Caco-2 (cell line): ENCODE measurements at regions of chr2 and their contacts with region 1.

Region 1: DNA sequence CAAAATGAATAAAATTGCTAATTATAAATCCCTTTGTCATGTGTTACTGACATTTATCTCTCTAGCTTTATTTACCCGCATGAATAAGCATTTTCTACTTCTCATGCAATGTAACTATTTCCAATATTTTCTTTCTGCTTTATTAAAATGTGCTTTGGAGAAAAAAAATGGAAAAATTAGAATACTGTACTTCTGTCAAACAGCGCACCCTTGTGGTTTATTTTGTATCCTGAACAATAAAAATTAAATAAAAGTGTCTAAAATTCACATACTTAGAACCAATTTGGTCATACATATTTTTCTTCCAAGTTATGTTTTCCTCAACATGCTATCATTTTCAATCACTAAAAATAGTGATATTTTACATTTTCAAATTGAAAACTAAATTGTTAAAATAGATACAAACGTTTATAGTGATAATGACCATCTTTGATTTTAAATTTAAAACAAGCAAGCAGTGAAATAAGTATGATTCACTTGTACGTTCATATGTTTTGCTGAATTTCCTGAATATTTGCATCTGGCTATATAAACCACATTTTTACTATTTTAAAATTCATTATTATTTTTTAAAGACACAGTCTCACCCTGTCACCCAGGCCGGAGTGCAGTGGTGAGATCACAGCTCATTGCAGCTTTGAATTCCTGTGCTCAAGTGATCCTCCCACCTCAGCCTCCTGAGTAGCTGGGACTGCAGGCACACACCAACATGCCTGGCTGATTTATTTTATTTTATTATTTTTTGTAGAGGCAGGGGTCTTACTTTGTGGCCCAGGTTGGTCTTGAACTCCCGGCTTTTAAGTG is 95.9 kb upstream of the GRB14 start:
- DNase-seq: peak in 1 of 2 experiments; percentile 39
- H3K4me3 ChIP-seq: no peak overlapping the region
- H3K4me3 Mint-ChIP-seq: no peak overlapping the region
- H3K27ac Mint-ChIP-seq: no peak overlapping the region
- H3K4me1 ChIP-seq: peaks cover 53% of the 10 kb centered on the region
- H3K4me1 Mint-ChIP-seq: peaks cover 34% of the 10 kb centered on the region
- H3K27me3 ChIP-seq: no peaks in the 10 kb centered on the region
- H3K27me3 Mint-ChIP-seq: no peaks in the 10 kb centered on the region
- CTCF ChIP-seq: peak; percentile 45 to 77

Region 2: DNA sequence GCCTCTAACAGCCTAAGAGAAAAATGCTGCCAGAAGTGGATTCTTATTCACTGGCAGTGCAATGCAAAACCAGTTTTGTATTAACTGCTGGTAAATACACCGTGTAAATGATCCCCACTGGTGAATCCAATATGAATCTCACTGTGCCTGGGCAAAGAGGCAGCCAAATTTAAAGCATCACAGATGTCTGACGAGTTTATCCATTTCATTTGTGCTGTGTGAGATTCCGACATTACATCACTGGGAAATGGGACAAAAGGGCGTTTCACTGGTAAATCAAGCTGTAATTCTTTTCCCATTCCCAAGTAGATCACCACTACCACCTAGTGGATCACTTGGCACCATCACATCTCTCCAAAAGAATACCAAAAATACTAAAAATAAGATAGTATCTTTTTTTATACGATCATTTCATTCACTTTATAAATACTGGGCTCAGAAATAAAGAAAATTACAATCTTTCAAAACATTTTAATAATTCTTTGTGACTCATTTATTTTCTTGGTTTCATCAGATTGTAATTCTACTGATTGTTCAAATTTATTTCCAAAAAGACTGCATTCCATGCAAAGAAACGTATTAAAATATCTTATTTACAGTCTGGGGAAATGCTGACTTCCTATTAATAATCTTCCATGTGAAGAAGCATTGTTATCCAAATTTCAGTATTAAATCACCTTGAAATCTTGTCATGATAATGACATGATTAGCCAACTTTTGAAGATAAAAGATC is 221.5 kb before region 1 on chr2:
- CTCF ChIA-PET with region 1: no interaction called
- POLR2A ChIA-PET with region 1: no interaction called
- intact Hi-C with region 1: loop called (anchors 5 kb)
- DNase-seq: peak in 1 of 2 experiments; percentile 40
- H3K4me3 ChIP-seq: no peak overlapping the region
- H3K4me3 Mint-ChIP-seq: no peak overlapping the region
- H3K27ac Mint-ChIP-seq: no peak overlapping the region
- H3K4me1 ChIP-seq: 0 out of 2 replicates have a peak, but pooled peaks cover 10% of the 10 kb centered on the region
- H3K4me1 Mint-ChIP-seq: peaks cover 10% of the 10 kb centered on the region
- H3K27me3 ChIP-seq: no peaks in the 10 kb centered on the region
- H3K27me3 Mint-ChIP-seq: no peaks in the 10 kb centered on the region
- CTCF ChIP-seq: peak; percentile 51 to 60

Region 3: GRCh38 chr2:164560181-164560792 is 156.9 kb before region 1 on chr2:
- CTCF ChIA-PET with region 1: interaction called, 8 read pairs
- POLR2A ChIA-PET with region 1: no interaction called
- intact Hi-C with region 1: loop called (anchors 1 kb)
- DNase-seq: peak in 1 of 2 experiments; percentile 47
- H3K4me3 ChIP-seq: no peak overlapping the region
- H3K4me3 Mint-ChIP-seq: no peak overlapping the region
- H3K27ac Mint-ChIP-seq: no peak overlapping the region
- H3K4me1 ChIP-seq: 0 out of 2 replicates have a peak, but pooled peaks cover 4% of the 10 kb centered on the region
- H3K4me1 Mint-ChIP-seq: peaks cover 2% of the 10 kb centered on the region
- H3K27me3 ChIP-seq: no peaks in the 10 kb centered on the region
- H3K27me3 Mint-ChIP-seq: no peaks in the 10 kb centered on the region
- CTCF ChIP-seq: peak; percentile 74 to 76

Region 4: GRCh38 chr2:164599966-164600589 is 117.1 kb before region 1 on chr2:
- CTCF ChIA-PET with region 1: no interaction called
- POLR2A ChIA-PET with region 1: no interaction called
- intact Hi-C with region 1: loop called (anchors 2 kb)
- DNase-seq: peak; percentile 60 to 80
- H3K4me3 ChIP-seq: no peak overlapping the region
- H3K4me3 Mint-ChIP-seq: no peak overlapping the region
- H3K27ac Mint-ChIP-seq: no peak overlapping the region
- H3K4me1 ChIP-seq: no peaks in the 10 kb centered on the region
- H3K4me1 Mint-ChIP-seq: no peaks in the 10 kb centered on the region
- H3K27me3 ChIP-seq: no peaks in the 10 kb centered on the region
- H3K27me3 Mint-ChIP-seq: no peaks in the 10 kb centered on the region
- CTCF ChIP-seq: peak; percentile 92 to 95

Region 5: GRCh38 chr2:164697674-164698461 is 19.3 kb before region 1 on chr2:
- CTCF ChIA-PET with region 1: no interaction called
- POLR2A ChIA-PET with region 1: no interaction called
- intact Hi-C with region 1: loop called (anchors 1 kb)
- DNase-seq: peak in 1 of 2 experiments; percentile 36
- H3K4me3 ChIP-seq: no peak overlapping the region
- H3K4me3 Mint-ChIP-seq: peak overlapping the region; percentile 45
- H3K27ac Mint-ChIP-seq: no peak overlapping the region
- H3K4me1 ChIP-seq: peaks cover 18% of the 10 kb centered on the region
- H3K4me1 Mint-ChIP-seq: peaks cover 14% of the 10 kb centered on the region
- H3K27me3 ChIP-seq: no peaks in the 10 kb centered on the region
- H3K27me3 Mint-ChIP-seq: no peaks in the 10 kb centered on the region
- CTCF ChIP-seq: peak; percentile 65 to 66